ENCODE measurements at regions of chr1 and their contacts with region 1.

Region 1: GRCh38 chr1:236103646-236104218 is 38.6 kb upstream of the GPR137B start:
- DNase-seq: no peak
- ATAC-seq: peak; percentile 67
- H3K4me3 Mint-ChIP-seq: no peak overlapping the region
- H3K27ac Mint-ChIP-seq: no peak overlapping the region
- H3K4me1 Mint-ChIP-seq: peaks cover 2% of the 10 kb centered on the region
- H3K27me3 Mint-ChIP-seq: peaks cover 4% of the 10 kb centered on the region
- CTCF ChIP-seq: peak; percentile 52

Region 2: GRCh38 chr1:236051242-236051791 is 52.4 kb before region 1 on chr1:
- CTCF ChIA-PET with region 1: no interaction called
- POLR2A ChIA-PET with region 1: no interaction called
- intact Hi-C with region 1: no loop called
- DNase-seq: no peak
- ATAC-seq: no peak
- H3K4me3 Mint-ChIP-seq: no peak overlapping the region
- H3K27ac Mint-ChIP-seq: no peak overlapping the region
- H3K4me1 Mint-ChIP-seq: peaks cover 1% of the 10 kb centered on the region
- H3K27me3 Mint-ChIP-seq: peaks cover 18% of the 10 kb centered on the region
- CTCF ChIP-seq: no peak

Region 3: DNA sequence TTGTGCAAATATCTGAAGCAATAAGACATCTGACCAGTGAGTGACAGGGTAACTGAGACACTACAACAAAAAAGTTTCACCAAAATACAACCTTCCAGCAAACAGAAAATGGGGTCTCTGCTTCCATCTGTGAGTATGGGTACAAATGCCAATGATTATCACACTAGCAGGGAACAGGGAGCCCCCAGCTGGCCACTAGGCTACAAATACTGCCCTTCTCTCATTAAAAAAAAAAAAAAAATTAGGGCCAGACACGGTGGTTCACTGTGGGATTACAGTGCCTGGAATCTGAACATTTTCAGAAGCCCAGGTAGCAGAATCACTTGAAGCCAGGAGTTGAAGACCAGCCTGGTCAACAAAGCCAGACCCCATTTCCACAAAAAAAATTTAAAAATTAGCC is 242.0 kb after region 1 on chr1:
- CTCF ChIA-PET with region 1: interaction called, 3 read pairs
- POLR2A ChIA-PET with region 1: no interaction called
- intact Hi-C with region 1: loop called (anchors 1 kb)
- DNase-seq: no peak
- ATAC-seq: no peak
- H3K4me3 Mint-ChIP-seq: no peak overlapping the region
- H3K27ac Mint-ChIP-seq: no peak overlapping the region
- H3K4me1 Mint-ChIP-seq: no peaks in the 10 kb centered on the region
- H3K27me3 Mint-ChIP-seq: peaks cover 12% of the 10 kb centered on the region
- CTCF ChIP-seq: no peak

Region 4: DNA sequence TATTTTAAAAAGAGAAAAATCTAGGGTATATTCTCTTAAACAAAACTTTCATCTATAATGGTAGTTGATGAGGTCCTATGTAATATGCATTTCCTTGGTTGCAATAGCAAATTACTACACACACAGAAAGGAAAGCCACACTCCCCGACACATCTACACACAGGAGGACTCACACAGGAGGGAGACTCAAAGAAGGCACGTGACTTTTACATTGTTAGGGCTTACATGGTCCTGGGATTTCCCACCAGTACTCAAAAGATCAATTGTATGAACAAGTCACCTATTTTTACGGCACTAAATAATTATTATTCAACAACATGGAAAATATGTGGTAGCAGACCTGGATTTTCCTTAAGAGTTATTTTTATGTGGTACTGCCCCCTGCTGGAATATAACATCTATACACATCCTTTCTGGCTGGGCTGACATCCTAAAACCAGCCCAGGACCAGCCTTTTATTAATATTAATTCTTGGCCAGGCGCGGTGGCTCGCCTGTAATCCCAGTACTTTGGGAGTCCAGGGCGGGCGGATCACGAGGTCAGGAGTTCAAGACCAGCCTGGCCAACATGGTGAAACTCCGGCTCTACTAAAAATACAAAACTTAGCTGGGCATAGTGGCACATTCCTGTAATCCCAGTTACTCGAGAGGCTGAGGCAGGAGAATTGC is 386.1 kb after region 1 on chr1:
- CTCF ChIA-PET with region 1: interaction called, 23 read pairs
- POLR2A ChIA-PET with region 1: no interaction called
- intact Hi-C with region 1: loop called (anchors 1 kb)
- DNase-seq: no peak
- ATAC-seq: peak; percentile 49
- H3K4me3 Mint-ChIP-seq: no peak overlapping the region
- H3K27ac Mint-ChIP-seq: no peak overlapping the region
- H3K4me1 Mint-ChIP-seq: no peaks in the 10 kb centered on the region
- H3K27me3 Mint-ChIP-seq: peaks cover 26% of the 10 kb centered on the region
- CTCF ChIP-seq: no peak

Region 5: GRCh38 chr1:236552901-236553300 is 449.2 kb after region 1 on chr1:
- CTCF ChIA-PET with region 1: interaction called, 3 read pairs
- POLR2A ChIA-PET with region 1: no interaction called
- intact Hi-C with region 1: loop called (anchors 5 kb)
- DNase-seq: no peak
- ATAC-seq: no peak
- H3K4me3 Mint-ChIP-seq: no peak overlapping the region
- H3K27ac Mint-ChIP-seq: no peak overlapping the region
- H3K4me1 Mint-ChIP-seq: no peaks in the 10 kb centered on the region
- H3K27me3 Mint-ChIP-seq: no peaks in the 10 kb centered on the region
- CTCF ChIP-seq: no peak

Region 6: GRCh38 chr1:236868625-236869467 is 765.1 kb after region 1 on chr1:
- CTCF ChIA-PET with region 1: interaction called, 4 read pairs
- POLR2A ChIA-PET with region 1: no interaction called
- intact Hi-C with region 1: loop called (anchors 1 kb)
- DNase-seq: no peak
- ATAC-seq: peak; percentile 31
- H3K4me3 Mint-ChIP-seq: no peak overlapping the region
- H3K27ac Mint-ChIP-seq: no peak overlapping the region
- H3K4me1 Mint-ChIP-seq: no peaks in the 10 kb centered on the region
- H3K27me3 Mint-ChIP-seq: no peaks in the 10 kb centered on the region
- CTCF ChIP-seq: peak; percentile 84

Region 7: DNA sequence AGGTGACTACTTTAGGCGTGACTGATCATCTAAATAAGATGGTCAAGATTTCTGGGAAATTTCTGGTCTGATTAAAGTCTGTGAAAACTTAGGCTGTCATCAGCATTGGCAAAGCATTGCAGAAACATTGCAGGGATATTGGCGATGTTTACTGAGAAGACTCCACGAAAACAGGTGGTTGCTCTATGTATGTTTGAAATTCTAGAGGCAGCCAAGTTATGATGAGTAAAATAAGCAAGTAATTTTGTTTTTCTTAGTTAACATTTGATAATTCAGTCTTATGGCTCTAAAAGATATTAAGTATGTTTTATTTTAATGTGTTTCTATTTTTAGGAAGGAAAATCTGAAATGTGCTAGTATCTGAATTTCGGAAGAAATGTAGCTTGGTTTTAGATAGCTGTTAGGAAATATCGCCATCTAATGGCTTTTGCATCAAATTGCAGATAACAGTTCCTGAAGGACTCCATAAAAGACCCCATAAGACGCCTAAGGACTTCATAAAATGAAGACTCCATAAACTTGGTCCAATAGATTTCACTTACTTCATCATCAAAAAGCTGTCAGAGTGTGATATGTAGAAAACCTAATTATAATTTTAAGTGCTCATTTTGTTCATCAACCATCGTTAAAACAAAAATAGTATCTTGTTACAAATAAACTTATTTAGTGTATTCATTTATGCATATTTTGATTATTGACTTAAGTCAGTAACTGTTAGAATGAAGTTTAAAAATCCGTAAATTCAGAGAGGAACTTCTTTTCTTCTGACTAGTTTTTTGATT is 1282.8 kb after region 1 on chr1:
- CTCF ChIA-PET with region 1: interaction called, 6 read pairs
- POLR2A ChIA-PET with region 1: no interaction called
- intact Hi-C with region 1: loop called (anchors 5 kb)
- DNase-seq: no peak
- ATAC-seq: no peak
- H3K4me3 Mint-ChIP-seq: no peak overlapping the region
- H3K27ac Mint-ChIP-seq: no peak overlapping the region
- H3K4me1 Mint-ChIP-seq: no peaks in the 10 kb centered on the region
- H3K27me3 Mint-ChIP-seq: no peaks in the 10 kb centered on the region
- CTCF ChIP-seq: no peak

Region 8: DNA sequence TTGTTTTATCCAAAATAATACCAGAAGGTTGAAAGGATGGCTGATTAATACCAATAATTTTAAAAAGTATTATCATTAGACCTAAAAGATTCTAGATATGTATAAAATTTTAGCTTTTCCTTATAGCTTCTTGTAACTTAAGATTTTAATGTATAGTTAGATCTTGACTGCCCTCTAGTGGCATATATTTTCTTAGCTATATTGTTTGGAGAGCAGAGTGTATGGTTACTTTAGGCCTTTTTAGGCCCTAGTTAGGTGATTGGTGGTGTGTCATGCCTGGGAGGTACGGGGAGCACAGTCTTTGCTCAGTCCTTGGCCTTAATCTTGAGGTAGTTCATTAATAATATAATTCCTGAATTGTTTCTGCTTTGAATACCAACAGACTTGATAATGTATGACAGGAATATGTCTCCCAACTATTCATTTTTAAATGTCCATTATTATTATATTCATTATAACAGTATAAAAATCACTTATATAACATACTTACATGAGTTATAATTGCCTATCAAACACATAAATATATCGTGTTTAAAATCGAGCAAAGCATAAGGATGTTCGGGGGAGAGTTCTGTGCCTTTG is 1458.6 kb after region 1 on chr1:
- CTCF ChIA-PET with region 1: interaction called, 5 read pairs
- POLR2A ChIA-PET with region 1: no interaction called
- intact Hi-C with region 1: loop called (anchors 1 kb)
- DNase-seq: no peak
- ATAC-seq: no peak
- H3K4me3 Mint-ChIP-seq: no peak overlapping the region
- H3K27ac Mint-ChIP-seq: no peak overlapping the region
- H3K4me1 Mint-ChIP-seq: no peaks in the 10 kb centered on the region
- H3K27me3 Mint-ChIP-seq: no peaks in the 10 kb centered on the region
- CTCF ChIP-seq: peak; percentile 63

Measured in activated B cell treated with CpG ODN at 0.5 μM for 24 hours (primary cell).